Mammary epithelial cell (primary cell): ENCODE measurements at regions of chr6 and their contacts with region 1.

Region 1: DNA sequence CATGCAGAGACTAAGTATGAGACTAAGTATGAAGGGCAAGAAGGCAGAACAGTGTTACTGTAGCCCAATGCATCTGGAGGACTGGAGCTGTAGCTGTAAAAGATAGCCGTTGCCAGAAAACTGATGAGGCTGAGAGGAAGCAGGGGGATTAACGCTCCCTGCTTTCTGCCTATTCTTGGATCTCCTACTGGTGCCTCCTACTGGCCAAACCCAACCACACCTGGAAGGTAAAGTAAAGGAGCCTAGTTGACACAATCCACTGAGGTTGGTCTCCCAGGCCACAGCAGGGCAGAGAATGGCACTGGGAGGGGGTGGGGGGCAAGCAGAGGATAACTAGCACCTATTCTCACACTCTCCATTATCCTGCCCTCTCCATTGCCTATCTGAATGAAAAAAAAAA is 105.0 kb upstream of the MRPS10 start:
- DNase-seq: no peak
- H3K4me3 ChIP-seq: no peak overlapping the region
- H3K27ac ChIP-seq: no peak overlapping the region
- H3K4me1 ChIP-seq: peaks cover 20% of the 10 kb centered on the region
- H3K27me3 ChIP-seq: no peaks in the 10 kb centered on the region
- CTCF ChIP-seq: no peak

Region 2: GRCh38 chr6:42086046-42087035 is 236.3 kb before region 1 on chr6:
- CTCF ChIA-PET with region 1: no interaction called
- dilution Hi-C with region 1: no loop called
- in situ Hi-C with region 1: no loop called
- intact Hi-C with region 1: no loop called
- DNase-seq: no peak
- H3K4me3 ChIP-seq: no peak overlapping the region
- H3K27ac ChIP-seq: no peak overlapping the region
- H3K4me1 ChIP-seq: peaks cover 14% of the 10 kb centered on the region
- H3K27me3 ChIP-seq: no peaks in the 10 kb centered on the region
- CTCF ChIP-seq: peak; percentile 36 to 41

Region 3: DNA sequence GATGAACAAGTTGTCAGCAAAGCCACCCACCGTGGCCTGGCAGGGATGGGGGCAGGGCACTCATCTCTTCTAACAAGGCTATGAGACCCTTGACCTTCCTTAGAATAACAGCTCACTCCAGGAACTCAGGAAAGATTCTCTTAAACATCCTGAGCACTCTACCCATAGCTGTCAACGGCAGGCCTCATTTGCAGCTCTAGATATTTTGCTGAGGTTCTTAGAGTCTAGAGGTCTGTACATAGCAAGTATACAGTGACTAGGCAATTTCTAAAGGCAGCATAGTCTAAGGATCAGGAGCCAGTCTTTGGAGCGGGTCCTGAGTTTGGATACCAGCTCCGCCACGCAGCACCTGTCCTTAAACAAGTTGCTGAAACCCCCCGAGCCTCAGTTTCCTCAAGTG is 117.4 kb after region 1 on chr6:
- CTCF ChIA-PET with region 1: interaction called, 15 read pairs
- dilution Hi-C with region 1: no loop called
- in situ Hi-C with region 1: no loop called
- intact Hi-C with region 1: no loop called
- DNase-seq: no peak
- H3K4me3 ChIP-seq: no peak overlapping the region
- H3K27ac ChIP-seq: no peak overlapping the region
- H3K4me1 ChIP-seq: no peaks in the 10 kb centered on the region
- H3K27me3 ChIP-seq: no peaks in the 10 kb centered on the region
- CTCF ChIP-seq: no peak

Region 4: GRCh38 chr6:42547407-42548329 is 225.0 kb after region 1 on chr6:
- CTCF ChIA-PET with region 1: no interaction called
- dilution Hi-C with region 1: no loop called
- in situ Hi-C with region 1: no loop called
- intact Hi-C with region 1: no loop called
- DNase-seq: peak; percentile 56
- H3K4me3 ChIP-seq: peak overlapping the region; percentile 51 to 57 (median 54)
- H3K27ac ChIP-seq: no peak overlapping the region
- H3K4me1 ChIP-seq: peaks cover 6% of the 10 kb centered on the region
- H3K27me3 ChIP-seq: no peaks in the 10 kb centered on the region
- CTCF ChIP-seq: peak; percentile 86 to 99